Heart left ventricle (tissue), 16 donors: ENCODE measurements at regions of chr19 and their contacts with region 1.

Region 1: GRCh38 chr19:52637718-52638585 is at the start of gene ZNF83:
- DNase-seq: peak; percentile 96 to 99 (median 97)
- ATAC-seq: peak; percentile 99
- H3K4me3 ChIP-seq: peak within 1 kb of the TSS; percentile 50 to 97 (median 74)
- H3K27ac ChIP-seq: peak within 1 kb of the TSS; percentile 55 to 92 (median 86)
- H3K4me1 ChIP-seq: peaks cover 0 to 22% (median 11%) of the 10 kb centered on the region in 12 donors
- H3K27me3 ChIP-seq: no peaks in the 10 kb centered on the region
- CTCF ChIP-seq: no peak
- POLR2A ChIP-seq: peak in 1 of 2 donors; percentile 60
- total RNA-seq, gene ZNF83: 9.5 to 23.4 (median 18.4) TPM

Region 2: DNA sequence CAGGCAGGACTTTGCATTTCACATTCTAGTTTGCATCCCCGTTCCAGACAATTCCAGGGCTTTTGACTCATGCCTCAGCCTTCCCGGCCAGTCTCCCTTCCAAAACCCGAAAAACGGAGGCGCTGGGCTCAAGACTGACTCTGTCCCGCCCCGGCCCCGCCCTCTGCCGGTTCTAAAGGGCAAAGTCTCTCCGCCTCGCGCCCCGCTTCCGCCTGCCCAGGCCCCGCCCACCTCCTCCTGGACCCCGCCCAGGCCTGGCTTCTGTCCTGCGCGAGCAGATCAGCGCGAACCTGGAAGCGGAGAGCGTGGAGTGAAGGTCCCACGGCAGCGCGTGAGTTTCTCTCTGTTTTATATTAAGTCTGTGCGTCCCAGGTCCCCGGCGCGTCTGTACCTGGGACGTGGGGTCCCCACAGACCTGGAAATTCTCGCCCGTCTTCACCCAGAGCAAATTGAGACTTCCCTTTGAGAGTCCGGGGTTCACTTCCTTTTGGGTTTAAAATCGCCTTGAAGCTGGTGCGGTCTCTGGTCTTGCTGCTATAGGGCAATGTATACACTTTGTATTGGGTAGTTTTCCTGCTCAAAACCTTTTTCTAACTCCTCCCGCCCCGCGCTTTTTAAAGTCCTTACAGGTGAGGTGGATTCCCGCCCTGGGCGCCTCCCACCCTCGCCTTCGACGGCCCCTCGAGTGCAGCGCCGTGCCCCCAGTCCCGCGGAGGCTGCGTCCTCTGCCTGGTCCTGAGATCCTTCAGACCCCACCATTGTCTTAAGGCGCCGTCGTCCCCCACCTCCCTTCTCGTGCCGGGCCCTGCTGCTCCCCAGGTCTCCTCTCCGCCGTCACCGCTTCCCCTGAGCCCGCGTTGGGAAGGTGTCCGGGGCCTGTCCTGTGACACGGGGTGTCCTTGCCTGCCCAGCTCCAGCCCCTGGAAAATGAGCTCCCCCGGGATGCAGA is 36.7 kb before region 1 on chr19:
- intact Hi-C with region 1: loop called in 2 of 10 experiments (anchors 5 kb)
- DNase-seq: peak; percentile 94 to 97 (median 95)
- ATAC-seq: peak; percentile 95 to 99 (median 99)
- H3K4me3 ChIP-seq: peak overlapping the region; percentile 43 to 80 (median 68)
- H3K27ac ChIP-seq: peak overlapping the region in 11 of 12 donors; percentile 32 to 74 (median 66)
- H3K4me1 ChIP-seq: peaks cover 0 to 19% (median 12%) of the 10 kb centered on the region in 12 donors
- H3K27me3 ChIP-seq: no peaks in the 10 kb centered on the region
- CTCF ChIP-seq: peak in 11 of 12 donors; percentile 24 to 65 (median 46)
- POLR2A ChIP-seq: peak in 1 of 2 donors; percentile 25

Region 3: DNA sequence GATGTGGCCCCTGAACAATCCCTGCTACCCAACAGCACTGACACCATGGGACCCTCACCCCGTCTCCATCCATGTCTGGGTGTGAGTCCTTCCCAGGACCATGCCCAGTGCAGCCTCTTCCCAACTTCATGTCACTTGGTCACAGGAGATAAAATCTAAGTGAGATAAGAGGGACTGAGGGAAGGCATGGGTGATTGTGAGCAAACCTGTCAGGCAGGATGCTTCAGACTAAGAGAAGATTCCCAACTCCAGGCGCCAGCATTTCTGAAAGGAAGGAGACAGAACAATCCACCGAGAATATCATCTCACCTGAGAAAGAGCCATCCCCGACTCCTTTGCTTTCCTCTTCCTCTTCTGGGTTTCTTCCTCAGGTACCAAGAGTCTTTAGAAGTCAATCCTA is 252.0 kb after region 1 on chr19:
- intact Hi-C with region 1: no loop called
- DNase-seq: no peak
- ATAC-seq: no peak
- H3K4me3 ChIP-seq: no peak overlapping the region
- H3K27ac ChIP-seq: no peak overlapping the region
- H3K4me1 ChIP-seq: no peaks in the 10 kb centered on the region
- H3K27me3 ChIP-seq: no peaks in the 10 kb centered on the region
- CTCF ChIP-seq: no peak
- POLR2A ChIP-seq: no peak